ENCODE measurements at regions of chr19 and their contacts with region 1.

Region 1: GRCh38 chr19:4697321-4697720 is 26.3 kb downstream of the DPP9 start:
- DNase-seq: no peak
- H3K4me3 ChIP-seq: no peak overlapping the region
- H3K27ac ChIP-seq: peak overlapping the region; percentile 83 to 91
- H3K4me1 ChIP-seq: peaks cover 9 to 13% of the 10 kb centered on the region in 2 donors
- H3K27me3 ChIP-seq: no peaks in the 10 kb centered on the region
- CTCF ChIP-seq: no peak
- POLR2A ChIP-seq: no peak

Region 2: GRCh38 chr19:4713384-4713951 is 16.1 kb after region 1 on chr19:
- intact Hi-C with region 1: no loop called
- DNase-seq: peak; percentile 93 to 96
- H3K4me3 ChIP-seq: peak overlapping the region in 2 of 3 donors; percentile 29 to 53
- H3K27ac ChIP-seq: peak overlapping the region; percentile 88 to 94
- H3K4me1 ChIP-seq: peaks cover 18 to 41% of the 10 kb centered on the region in 2 donors
- H3K27me3 ChIP-seq: no peaks in the 10 kb centered on the region
- CTCF ChIP-seq: peak in 1 of 3 donors; percentile 7
- POLR2A ChIP-seq: no peak

Region 3: GRCh38 chr19:4723367-4724187 is 26.3 kb after region 1 on chr19 and contains the start of gene DPP9:
- intact Hi-C with region 1: loop called (anchors 1 kb)
- DNase-seq: peak; percentile 96 to 99
- H3K4me3 ChIP-seq: peak within 1 kb of the TSS; percentile 67 to 99 (median 92)
- H3K27ac ChIP-seq: peak within 1 kb of the TSS; percentile 95 to 96
- H3K4me1 ChIP-seq: peaks cover 9 to 12% of the 10 kb centered on the region in 2 donors
- H3K27me3 ChIP-seq: no peaks in the 10 kb centered on the region
- CTCF ChIP-seq: peak; percentile 53 to 75 (median 67)
- POLR2A ChIP-seq: no peak
- total RNA-seq, gene DPP9: 33.6 to 74.1 (median 49.6) TPM